Naive thymus-derived CD4-positive, alpha-beta T cell (primary cell): ENCODE measurements at regions of chr18 and their contacts with region 1.

Region 1: DNA sequence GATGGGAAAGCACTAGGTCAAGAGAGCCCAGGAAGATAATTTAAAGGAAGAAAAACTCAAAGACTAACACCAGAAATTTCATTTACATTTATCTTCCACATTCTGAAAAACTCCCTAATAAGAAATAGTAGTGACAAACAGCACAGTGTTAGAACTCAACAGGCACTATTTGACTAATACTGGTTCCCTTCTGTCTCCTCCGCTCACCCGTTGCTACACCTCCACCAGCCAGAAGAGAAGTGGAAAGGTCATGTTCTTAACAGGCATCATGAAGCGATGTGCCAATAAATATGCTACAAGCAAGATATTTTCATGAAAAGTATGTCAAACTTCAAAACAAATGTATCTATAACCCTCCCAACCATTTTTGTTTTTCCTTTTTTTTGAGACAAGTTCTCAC is 5.7 kb downstream of the ROCK1 start:
- DNase-seq: no peak
- ATAC-seq: no peak
- H3K4me3 ChIP-seq: no peak overlapping the region
- H3K4me3 Mint-ChIP-seq: peak overlapping the region in 4 of 10 donors; percentile 18 to 59 (median 36)
- H3K27ac ChIP-seq: no peak overlapping the region
- H3K27ac Mint-ChIP-seq: peak overlapping the region in 7 of 9 donors; percentile 0 to 72 (median 9)
- H3K4me1 ChIP-seq: peaks cover 44 to 53% of the 10 kb centered on the region in 2 donors
- H3K4me1 Mint-ChIP-seq: peaks cover 24 to 49% (median 31%) of the 10 kb centered on the region in 7 donors
- H3K27me3 ChIP-seq: no peaks in the 10 kb centered on the region
- H3K27me3 Mint-ChIP-seq: no peaks in the 10 kb centered on the region

Region 2: GRCh38 chr18:21123290-21123926 is 17.5 kb after region 1 on chr18:
- CTCF ChIA-PET with region 1: no interaction called
- POLR2A ChIA-PET with region 1: interaction called, 11 read pairs
- intact Hi-C with region 1: loop called in 1 of 2 experiments (anchors 2 kb)
- DNase-seq: peak in 1 of 9 donors; percentile 8
- ATAC-seq: no peak
- H3K4me3 ChIP-seq: no peak overlapping the region
- H3K4me3 Mint-ChIP-seq: peak overlapping the region in 8 of 10 donors; percentile 0 to 61 (median 50)
- H3K27ac ChIP-seq: no peak overlapping the region
- H3K27ac Mint-ChIP-seq: peak overlapping the region in 7 of 9 donors; percentile 0 to 75 (median 15)
- H3K4me1 ChIP-seq: no peaks in the 10 kb centered on the region
- H3K4me1 Mint-ChIP-seq: peaks cover 4 to 13% (median 6%) of the 10 kb centered on the region in 7 donors
- H3K27me3 ChIP-seq: peaks cover 0 to 2% of the 10 kb centered on the region in 2 donors
- H3K27me3 Mint-ChIP-seq: peaks cover 0 to 7% (median 3%) of the 10 kb centered on the region in 5 donors